Right ventricle myocardium inferior (tissue), 1 donor: ENCODE measurements at regions of chr4 and their contacts with region 1.

Region 1: DNA sequence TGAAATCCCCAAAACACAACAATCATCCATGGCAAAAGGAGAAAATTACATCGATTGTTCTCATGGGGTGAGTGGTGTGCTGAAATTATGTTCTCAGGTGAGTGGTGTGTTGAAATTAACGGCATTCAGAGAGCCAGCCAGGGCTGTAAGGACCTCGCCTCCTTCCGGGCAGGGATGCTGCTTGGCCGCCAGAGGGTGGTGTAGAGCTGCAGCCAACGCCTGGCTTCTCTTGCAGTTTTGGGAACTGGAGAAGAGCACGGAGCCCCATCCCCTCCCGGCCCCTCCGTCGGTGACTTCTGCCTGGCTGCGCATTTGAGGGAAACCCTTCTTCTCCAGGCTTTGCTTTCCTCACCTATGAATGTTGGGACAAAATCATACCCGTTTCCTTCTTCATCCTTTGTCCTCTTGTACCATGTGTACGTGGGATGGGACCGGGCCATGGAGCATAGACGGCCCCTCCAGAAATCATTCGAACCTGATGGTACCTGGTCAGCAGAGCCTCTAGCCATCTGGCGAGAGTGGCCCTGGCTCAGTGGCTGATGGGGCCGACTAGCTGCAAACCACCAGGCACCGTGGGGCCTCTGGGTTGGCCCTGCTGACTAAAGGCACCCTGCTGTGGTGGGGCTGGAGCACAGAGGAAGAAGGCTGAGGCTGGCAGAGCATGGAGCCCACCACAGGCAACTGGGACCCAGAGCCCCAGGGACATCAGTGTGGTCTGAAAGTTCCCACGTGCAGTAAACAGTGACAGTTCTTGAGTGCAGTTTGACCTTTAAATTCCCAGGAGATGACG is 28.4 kb downstream of the TRMT44 start:
- DNase-seq: peak; percentile 76
- ATAC-seq: peak; percentile 54

Region 2: GRCh38 chr4:8594097-8595038 is 125.4 kb after region 1 on chr4:
- intact Hi-C with region 1: loop called (anchors 1 kb)
- DNase-seq: peak; percentile 62
- ATAC-seq: peak; percentile 63

Region 3: DNA sequence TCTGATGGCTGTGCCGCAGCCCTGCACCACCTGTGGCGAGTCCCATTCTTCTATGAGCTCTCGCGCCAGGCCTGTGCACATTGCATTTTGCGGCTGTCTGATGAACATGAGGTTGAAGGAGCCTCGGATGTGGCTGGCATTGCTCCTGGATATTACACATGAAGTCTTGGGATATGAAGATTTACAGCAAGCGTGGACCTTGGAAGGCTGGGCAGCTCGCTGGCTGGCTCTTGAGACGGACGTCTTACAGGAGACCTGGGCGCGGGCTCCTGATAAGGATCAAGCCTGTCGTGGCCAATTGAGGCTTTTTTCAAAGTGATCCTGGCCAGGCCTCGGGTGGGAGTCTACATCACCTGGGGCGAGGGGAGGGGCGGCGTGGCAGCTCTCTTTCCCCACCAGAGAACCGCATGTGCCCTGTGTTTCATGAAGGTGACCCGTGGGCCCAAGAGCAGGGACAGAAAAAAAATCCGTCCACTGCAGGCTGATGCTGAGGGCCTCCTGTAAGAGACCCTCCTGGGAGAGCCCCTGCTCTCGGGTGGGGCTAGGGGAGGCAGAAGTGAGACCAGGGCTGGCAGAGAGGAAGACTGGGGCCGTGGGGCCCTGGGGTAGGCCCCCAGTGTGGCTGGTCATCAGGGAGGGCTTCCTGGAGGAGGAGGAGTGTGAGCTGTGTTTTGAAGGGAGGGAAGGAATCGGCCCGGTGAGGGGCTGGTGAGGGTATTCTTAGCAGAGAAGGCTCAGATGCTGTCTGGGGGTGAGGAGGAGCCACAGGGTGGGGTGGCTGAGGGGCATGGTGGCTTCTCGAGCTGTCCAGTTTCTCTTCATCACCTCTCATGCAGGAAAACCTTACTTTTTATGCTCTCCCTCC is 147.2 kb after region 1 on chr4:
- intact Hi-C with region 1: no loop called
- DNase-seq: peak; percentile 45
- ATAC-seq: no peak